ENCODE measurements at regions of chr11 and their contacts with region 1.

Region 1: GRCh38 chr11:112655371-112655770 is 305.8 kb upstream of the NCAM1 start:
- DNase-seq: peak; percentile 81 to 91 (median 87)
- ATAC-seq: peak; percentile 50 to 84 (median 78)
- H3K4me3 ChIP-seq: no peak overlapping the region
- H3K27ac ChIP-seq: peak overlapping the region in 8 of 12 donors; percentile 4 to 65 (median 40)
- H3K4me1 ChIP-seq: peaks cover 0 to 51% (median 21%) of the 10 kb centered on the region in 12 donors
- H3K27me3 ChIP-seq: no peaks in the 10 kb centered on the region
- CTCF ChIP-seq: peak in 4 of 12 donors; percentile 24 to 42 (median 28)
- POLR2A ChIP-seq: no peak

Region 2: DNA sequence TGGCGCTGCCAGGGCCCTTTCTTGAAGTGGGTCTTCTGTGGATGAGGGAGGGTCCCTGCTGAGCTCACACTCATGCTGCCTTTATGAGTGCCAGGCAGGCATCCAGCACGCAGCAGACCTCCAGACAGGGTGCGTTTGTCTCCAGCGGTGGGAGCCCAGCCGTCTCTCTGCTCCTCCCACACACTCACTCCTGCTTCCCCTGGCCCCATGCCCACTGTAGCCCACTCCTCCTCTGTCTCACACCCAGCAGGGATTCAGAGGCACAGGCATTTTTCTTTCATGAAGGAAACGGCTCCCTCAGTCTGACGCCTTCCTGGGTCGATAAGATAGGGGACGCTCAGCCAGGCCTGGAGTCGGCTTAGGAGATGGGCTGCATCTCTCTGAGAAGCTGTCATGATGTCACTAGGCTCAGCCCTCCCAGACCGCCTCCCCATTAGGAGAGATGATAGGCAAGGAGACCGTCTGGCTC is 121.9 kb after region 1 on chr11:
- intact Hi-C with region 1: loop called in 5 of 10 experiments (anchors 5 to 10 kb)
- DNase-seq: peak in 1 of 5 donors; percentile 58
- ATAC-seq: peak in 2 of 4 donors; percentile 33 to 45
- H3K4me3 ChIP-seq: no peak overlapping the region
- H3K27ac ChIP-seq: peak overlapping the region; percentile 18 to 84 (median 70)
- H3K4me1 ChIP-seq: peaks cover 0 to 48% (median 24%) of the 10 kb centered on the region in 12 donors
- H3K27me3 ChIP-seq: no peaks in the 10 kb centered on the region
- CTCF ChIP-seq: no peak
- POLR2A ChIP-seq: no peak

Region 3: DNA sequence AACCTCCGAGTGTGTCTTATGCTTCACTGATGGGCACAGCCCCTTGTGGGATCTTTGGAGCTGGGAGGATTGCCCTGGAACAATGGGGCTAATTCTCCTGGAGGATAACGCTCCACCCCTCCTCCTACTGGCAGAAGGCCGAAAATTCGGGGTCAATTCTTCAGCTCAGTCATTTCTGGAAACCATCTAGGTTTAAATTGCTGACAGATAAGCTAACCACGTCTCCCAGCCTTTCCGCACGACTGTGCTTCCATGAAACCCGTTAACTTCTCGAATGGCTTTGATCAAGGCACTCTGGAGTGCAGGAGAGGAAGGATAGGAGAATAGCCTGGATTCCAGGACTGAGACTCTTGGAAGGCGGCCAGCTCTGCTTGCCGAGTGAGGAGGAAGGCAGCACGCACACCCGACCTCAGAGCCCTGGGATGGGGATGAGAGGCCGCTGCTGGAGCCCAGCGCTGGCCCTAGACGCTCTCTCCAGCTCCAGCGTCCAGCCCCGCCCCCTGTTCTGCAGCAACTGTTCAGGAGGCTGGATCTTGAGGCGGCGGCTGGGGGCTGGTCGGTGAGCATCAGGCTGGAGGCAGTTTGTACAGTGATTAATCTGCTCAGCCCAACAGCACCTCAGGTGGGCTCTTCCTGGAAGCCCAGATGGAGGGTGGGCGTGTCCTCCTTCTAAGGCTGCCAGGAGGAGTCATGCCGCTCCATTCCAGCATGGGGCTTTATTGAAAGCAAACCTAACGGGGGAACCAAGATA is 129.1 kb after region 1 on chr11:
- intact Hi-C with region 1: loop called in 5 of 10 experiments (anchors 5 to 10 kb)
- DNase-seq: peak; percentile 68 to 91 (median 85)
- ATAC-seq: peak; percentile 63 to 83 (median 73)
- H3K4me3 ChIP-seq: peak overlapping the region in 9 of 12 donors; percentile 1 to 40 (median 27)
- H3K27ac ChIP-seq: peak overlapping the region; percentile 7 to 75 (median 56)
- H3K4me1 ChIP-seq: peaks cover 0 to 56% (median 34%) of the 10 kb centered on the region in 12 donors
- H3K27me3 ChIP-seq: no peaks in the 10 kb centered on the region
- CTCF ChIP-seq: peak in 2 of 12 donors; percentile 12 to 15
- POLR2A ChIP-seq: no peak

Region 4: GRCh38 chr11:112795142-112795815 is 139.9 kb after region 1 on chr11:
- intact Hi-C with region 1: loop called in 2 of 10 experiments (anchors 10 kb)
- DNase-seq: no peak
- ATAC-seq: peak in 2 of 4 donors; percentile 47 to 50
- H3K4me3 ChIP-seq: no peak overlapping the region
- H3K27ac ChIP-seq: peak overlapping the region in 4 of 12 donors; percentile 19 to 42 (median 29)
- H3K4me1 ChIP-seq: peaks cover 0 to 39% (median 14%) of the 10 kb centered on the region in 12 donors
- H3K27me3 ChIP-seq: no peaks in the 10 kb centered on the region
- CTCF ChIP-seq: peak; percentile 21 to 63 (median 47)
- POLR2A ChIP-seq: no peak

Region 5: DNA sequence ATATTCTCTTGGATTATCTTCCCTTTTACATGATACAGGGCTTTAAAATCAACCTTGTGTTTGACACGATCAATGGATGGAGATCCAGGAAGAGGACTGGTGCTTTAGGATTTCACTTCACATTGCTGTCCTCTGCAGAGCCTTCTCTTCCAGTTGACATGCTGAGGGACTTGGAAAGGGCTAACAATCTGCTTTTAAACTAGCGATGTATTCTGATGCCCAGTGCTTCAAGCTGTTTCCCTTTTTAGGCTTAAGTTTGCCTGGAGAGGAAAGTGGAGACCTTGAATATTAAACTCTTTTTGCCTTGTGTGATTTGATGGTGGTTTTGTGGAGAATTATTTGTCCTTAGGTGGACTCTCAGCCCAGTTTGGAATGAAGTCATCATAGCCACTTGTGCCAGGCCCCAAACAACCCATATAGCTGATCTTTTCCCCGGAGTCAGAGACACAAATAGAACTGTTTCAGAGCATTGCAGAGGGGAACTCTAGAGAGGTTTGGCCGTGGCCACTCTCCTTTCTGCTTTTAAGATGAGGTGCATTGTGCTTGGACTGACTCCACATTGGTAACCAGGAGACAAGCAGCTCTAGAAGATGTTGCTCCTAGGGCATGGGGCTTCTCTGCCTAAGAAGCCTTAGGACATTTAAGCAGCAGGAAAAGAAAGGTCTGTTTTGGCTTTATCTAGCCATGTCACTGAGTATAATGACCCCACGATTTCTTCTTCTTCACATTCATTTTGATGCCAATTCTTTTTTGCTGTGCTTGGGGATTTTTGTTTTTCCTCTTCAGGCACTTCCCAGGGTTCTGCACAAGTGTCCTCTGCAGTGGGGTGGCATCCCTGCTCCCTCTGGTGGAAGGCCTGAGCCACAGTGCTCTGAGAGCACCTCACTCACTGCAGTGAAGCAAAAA is 458.7 kb after region 1 on chr11:
- intact Hi-C with region 1: loop called in 4 of 10 experiments (anchors 5 to 10 kb)
- DNase-seq: peak; percentile 49 to 67 (median 64)
- ATAC-seq: peak; percentile 89 to 94 (median 91)
- H3K4me3 ChIP-seq: no peak overlapping the region
- H3K27ac ChIP-seq: peak overlapping the region in 9 of 12 donors; percentile 41 to 79 (median 62)
- H3K4me1 ChIP-seq: peaks cover 0 to 58% (median 21%) of the 10 kb centered on the region in 12 donors
- H3K27me3 ChIP-seq: no peaks in the 10 kb centered on the region
- CTCF ChIP-seq: peak; percentile 32 to 77 (median 65)
- POLR2A ChIP-seq: no peak